Left lung (tissue), 14 donors: ENCODE measurements at regions of chr7 and their contacts with region 1.

Region 1: GRCh38 chr7:74070619-74070921 is 13.0 kb upstream of the LIMK1 start:
- DNase-seq: peak in 1 of 4 donors; percentile 40
- ATAC-seq: no peak
- H3K4me3 ChIP-seq: no peak overlapping the region
- H3K27ac ChIP-seq: no peak overlapping the region
- H3K4me1 ChIP-seq: no peaks in the 10 kb centered on the region
- H3K27me3 ChIP-seq: no peaks in the 10 kb centered on the region
- CTCF ChIP-seq: no peak

Region 2: DNA sequence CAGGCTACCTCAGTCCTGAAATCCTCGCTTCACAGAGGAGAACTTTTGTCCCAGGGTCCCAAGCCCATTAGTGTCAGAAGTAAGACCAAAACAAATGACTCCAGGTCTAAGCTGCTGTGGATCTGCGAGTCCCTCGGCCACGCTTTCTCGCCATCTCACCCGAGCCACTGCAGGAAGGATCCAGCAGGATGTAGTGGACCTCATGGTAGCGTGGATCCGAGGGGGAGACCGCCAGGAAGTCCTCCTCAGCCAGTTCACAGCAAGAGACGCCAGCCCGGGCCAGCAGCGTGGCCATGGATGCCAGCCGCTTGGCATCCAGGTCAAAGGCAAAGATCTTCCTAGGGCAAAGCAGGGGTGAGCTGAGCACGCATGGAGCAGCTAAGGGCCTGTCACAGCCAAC is 766.5 kb before region 1 on chr7:
- intact Hi-C with region 1: no loop called
- DNase-seq: no peak
- ATAC-seq: no peak
- H3K4me3 ChIP-seq: no peak overlapping the region
- H3K27ac ChIP-seq: no peak overlapping the region
- H3K4me1 ChIP-seq: peaks cover 0 to 25% of the 10 kb centered on the region in 2 donors
- H3K27me3 ChIP-seq: no peaks in the 10 kb centered on the region
- CTCF ChIP-seq: no peak

Region 3: DNA sequence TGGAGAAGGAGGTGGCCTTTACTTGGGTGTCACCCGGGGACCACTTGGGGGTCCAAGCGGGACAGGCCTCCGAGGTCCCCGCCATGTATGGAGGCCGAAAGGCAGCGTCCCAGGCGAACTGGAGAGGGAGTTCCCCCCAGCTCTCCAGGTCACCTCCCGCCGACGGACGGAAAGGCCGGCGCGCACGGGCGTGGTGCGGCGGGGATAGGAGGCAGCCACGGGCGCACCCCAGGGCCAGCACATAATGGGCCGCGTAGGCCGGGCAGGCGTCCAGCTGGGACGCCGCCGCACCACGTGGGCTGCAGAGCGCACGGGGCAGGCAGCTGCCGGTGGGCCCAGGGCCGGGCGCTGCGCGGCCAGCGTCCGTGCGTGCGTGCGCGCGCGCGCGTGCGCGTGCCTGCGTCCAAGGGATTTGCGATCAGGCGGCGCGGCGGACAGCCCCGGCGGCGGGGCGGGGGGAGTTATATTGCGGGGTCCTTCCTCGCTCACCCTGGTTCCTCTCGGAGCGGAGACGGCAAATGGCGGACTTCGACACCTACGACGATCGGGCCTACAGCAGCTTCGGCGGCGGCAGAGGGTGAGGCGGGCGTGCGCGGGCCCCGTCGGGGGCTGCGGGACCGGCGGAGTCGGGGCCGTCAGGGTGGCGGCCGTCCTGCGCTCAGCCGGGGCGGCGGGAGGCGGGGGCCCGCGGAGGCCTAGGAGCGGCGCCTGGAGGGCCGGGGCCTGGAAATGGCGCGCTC is 103.5 kb after region 1 on chr7 and contains the start of gene EIF4H:
- intact Hi-C with region 1: loop called in 1 of 2 experiments (anchors 10 kb)
- DNase-seq: peak; percentile 96 to 99 (median 98)
- ATAC-seq: peak; percentile 92
- H3K4me3 ChIP-seq: peak within 1 kb of the TSS; percentile 81 to 100
- H3K27ac ChIP-seq: peak within 1 kb of the TSS; percentile 92 to 94
- H3K4me1 ChIP-seq: peaks cover 29 to 56% of the 10 kb centered on the region in 2 donors
- H3K27me3 ChIP-seq: no peaks in the 10 kb centered on the region
- CTCF ChIP-seq: no peak
- polyA plus RNA-seq, gene EIF4H: 258 to 308 (median 273) TPM

Region 4: GRCh38 chr7:74379938-74380337 is 309.4 kb after region 1 on chr7:
- intact Hi-C with region 1: loop called in 1 of 2 experiments (anchors 10 kb)
- DNase-seq: no peak
- ATAC-seq: no peak
- H3K4me3 ChIP-seq: no peak overlapping the region
- H3K27ac ChIP-seq: no peak overlapping the region
- H3K4me1 ChIP-seq: no peaks in the 10 kb centered on the region
- H3K27me3 ChIP-seq: no peaks in the 10 kb centered on the region
- CTCF ChIP-seq: no peak